ENCODE measurements at regions of chr21 and their contacts with region 1.

Region 1: GRCh38 chr21:43758111-43758641 is 17.9 kb downstream of the CSTB start:
- DNase-seq: no peak
- H3K4me3 Mint-ChIP-seq: no peak overlapping the region
- H3K27ac Mint-ChIP-seq: no peak overlapping the region
- H3K4me1 Mint-ChIP-seq: no peaks in the 10 kb centered on the region
- H3K27me3 Mint-ChIP-seq: no peaks in the 10 kb centered on the region

Region 2: GRCh38 chr21:43697758-43698643 is 60.2 kb before region 1 on chr21:
- CTCF ChIA-PET with region 1: no interaction called
- intact Hi-C with region 1: loop called (anchors 10 kb)
- DNase-seq: no peak
- H3K4me3 Mint-ChIP-seq: no peak overlapping the region
- H3K27ac Mint-ChIP-seq: no peak overlapping the region
- H3K4me1 Mint-ChIP-seq: peaks cover 12% of the 10 kb centered on the region
- H3K27me3 Mint-ChIP-seq: no peaks in the 10 kb centered on the region

Measured in activated naive CD4-positive, alpha-beta T cell treated with anti-CD3 and anti-CD28 coated beads for 36 hours (primary cell).